Activated CD8-positive, alpha-beta memory T cell treated with anti-CD3 and anti-CD28 coated beads, Interleukin-2, amount 10 ng/mL, durations not matched to agents 7 days and 5 days (primary cell): ENCODE measurements at regions of chr17 and their contacts with region 1.

Region 1: GRCh38 chr17:39939588-39940419 is 12.3 kb downstream of the LRRC3C start:
- DNase-seq: peak; percentile 72
- ATAC-seq: peak; percentile 87
- H3K4me3 Mint-ChIP-seq: no peak overlapping the region
- H3K27ac Mint-ChIP-seq: peak overlapping the region; percentile 37
- H3K4me1 Mint-ChIP-seq: peaks cover 19% of the 10 kb centered on the region
- H3K27me3 Mint-ChIP-seq: no peaks in the 10 kb centered on the region

Region 2: GRCh38 chr17:39668199-39668966 is 271.4 kb before region 1 on chr17 and contains the start of gene PNMT:
- CTCF ChIA-PET with region 1: no interaction called
- DNase-seq: peak; percentile 74
- ATAC-seq: peak; percentile 85
- H3K4me3 Mint-ChIP-seq: peak within 1 kb of the TSS; percentile 30
- H3K27ac Mint-ChIP-seq: no peak within 1 kb of the TSS
- H3K4me1 Mint-ChIP-seq: peaks cover 11% of the 10 kb centered on the region
- H3K27me3 Mint-ChIP-seq: peaks cover 30% of the 10 kb centered on the region
- total RNA-seq, gene PNMT: not detected

Region 3: DNA sequence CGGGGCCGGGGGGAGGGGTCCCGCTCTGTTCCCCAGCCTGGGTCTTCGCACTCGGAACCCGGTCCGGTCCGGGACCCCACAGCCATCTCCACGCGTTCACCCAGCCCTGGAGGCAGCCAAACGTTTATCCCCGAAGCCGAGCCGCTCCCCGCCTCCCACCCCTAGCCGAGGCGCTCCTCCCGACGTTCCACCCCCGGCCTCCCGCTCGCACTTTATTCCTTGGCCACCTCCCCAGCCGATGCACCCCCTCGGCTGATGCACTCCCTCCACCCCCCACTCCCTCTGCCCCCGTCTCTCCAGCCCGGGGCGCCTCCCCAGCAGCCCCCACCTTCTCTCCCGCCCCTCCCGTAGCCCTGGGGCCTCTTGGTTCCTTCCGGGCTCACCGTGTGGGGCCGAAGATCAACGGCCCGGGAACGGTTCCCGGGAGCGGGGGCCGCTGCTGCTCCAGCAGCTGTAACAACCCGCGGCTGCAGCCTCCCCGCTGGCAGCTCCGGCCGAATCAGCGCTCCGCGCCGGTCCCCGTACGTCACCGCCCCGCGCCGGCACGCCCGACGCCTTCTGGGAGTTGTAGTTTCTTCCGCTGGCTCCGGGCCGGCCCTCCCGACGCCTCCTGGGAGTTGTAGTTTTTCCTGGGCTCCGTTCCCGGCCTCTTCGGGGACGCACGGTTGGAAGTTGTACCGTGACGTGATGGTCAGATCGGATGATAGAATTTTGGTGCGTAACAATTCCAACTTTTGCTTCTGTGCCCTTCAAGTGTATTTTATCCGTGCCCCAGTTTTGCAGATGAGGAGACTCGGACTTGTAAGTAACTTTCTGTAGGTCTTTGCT is 12.5 kb before region 1 on chr17 and contains the starts of genes LRRC3C and ORMDL3:
- CTCF ChIA-PET with region 1: interaction called, 13 read pairs
- DNase-seq: peak; percentile 95
- ATAC-seq: peak; percentile 86
- H3K4me3 Mint-ChIP-seq: peak within 1 kb of the TSS; percentile 88
- H3K27ac Mint-ChIP-seq: peak within 1 kb of the TSS; percentile 98
- H3K4me1 Mint-ChIP-seq: peaks cover 60% of the 10 kb centered on the region
- H3K27me3 Mint-ChIP-seq: no peaks in the 10 kb centered on the region
- total RNA-seq, gene LRRC3C: not detected
- total RNA-seq, gene ORMDL3: 111 to 131 TPM